ENCODE measurements at regions of chr9 and their contacts with region 1.

Region 1: DNA sequence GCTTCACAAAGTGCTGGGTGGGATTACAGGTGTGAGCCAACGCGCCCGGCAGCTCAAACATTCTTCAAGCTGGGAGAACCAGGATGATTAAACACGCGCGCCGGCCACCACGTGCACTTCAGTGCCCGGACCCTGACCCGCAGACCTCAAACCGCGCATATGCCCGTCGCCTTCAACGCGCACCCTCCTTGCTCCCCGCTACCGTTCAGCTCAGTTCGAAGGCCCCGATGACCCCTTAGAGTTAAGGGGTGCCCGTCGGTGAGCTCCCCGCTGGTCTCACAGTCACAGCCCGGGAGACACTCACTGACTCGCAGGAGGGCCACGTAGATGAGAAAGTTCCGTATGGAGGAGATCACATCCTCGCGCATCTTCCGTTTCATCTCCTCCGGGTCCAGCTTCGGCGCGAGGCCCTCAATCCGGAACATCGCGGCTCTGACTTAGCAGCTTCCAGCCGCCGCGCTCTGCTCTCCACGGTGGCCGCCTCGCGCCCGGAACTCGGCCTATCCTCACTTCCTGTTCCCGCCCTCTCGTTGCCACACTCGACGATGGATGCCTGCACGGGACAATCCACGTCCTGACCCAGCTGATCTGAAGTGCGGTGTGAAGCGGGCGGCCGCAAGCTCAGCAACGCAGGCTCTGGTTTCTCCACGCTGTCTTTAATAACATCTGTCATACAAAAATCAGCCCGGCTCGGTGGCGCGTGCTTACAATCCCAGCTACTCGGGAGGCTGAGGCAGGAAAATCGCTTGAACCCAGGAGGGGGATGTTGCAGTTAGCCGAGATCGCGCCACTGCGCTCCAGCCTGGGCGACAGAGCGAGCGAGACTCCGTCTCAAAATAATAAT is at the start of gene TOMM5:
- DNase-seq: peak; percentile 90 to 93 (median 92)
- H3K4me3 ChIP-seq: peak within 1 kb of the TSS; percentile 92 to 100
- H3K4me3 Mint-ChIP-seq: peak within 1 kb of the TSS; percentile 97 to 100 (median 98)
- H3K27ac ChIP-seq: peak within 1 kb of the TSS; percentile 79
- H3K27ac Mint-ChIP-seq: peak within 1 kb of the TSS; percentile 96 to 99 (median 98)
- H3K4me1 ChIP-seq: peaks cover 39% of the 10 kb centered on the region
- H3K4me1 Mint-ChIP-seq: peaks cover 22 to 50% (median 36%) of the 10 kb centered on the region in 4 donors
- H3K27me3 ChIP-seq: no peaks in the 10 kb centered on the region
- H3K27me3 Mint-ChIP-seq: peaks cover 3 to 10% of the 10 kb centered on the region in 2 donors
- total RNA-seq, gene TOMM5: 48.2 to 51.1 TPM

Region 2: DNA sequence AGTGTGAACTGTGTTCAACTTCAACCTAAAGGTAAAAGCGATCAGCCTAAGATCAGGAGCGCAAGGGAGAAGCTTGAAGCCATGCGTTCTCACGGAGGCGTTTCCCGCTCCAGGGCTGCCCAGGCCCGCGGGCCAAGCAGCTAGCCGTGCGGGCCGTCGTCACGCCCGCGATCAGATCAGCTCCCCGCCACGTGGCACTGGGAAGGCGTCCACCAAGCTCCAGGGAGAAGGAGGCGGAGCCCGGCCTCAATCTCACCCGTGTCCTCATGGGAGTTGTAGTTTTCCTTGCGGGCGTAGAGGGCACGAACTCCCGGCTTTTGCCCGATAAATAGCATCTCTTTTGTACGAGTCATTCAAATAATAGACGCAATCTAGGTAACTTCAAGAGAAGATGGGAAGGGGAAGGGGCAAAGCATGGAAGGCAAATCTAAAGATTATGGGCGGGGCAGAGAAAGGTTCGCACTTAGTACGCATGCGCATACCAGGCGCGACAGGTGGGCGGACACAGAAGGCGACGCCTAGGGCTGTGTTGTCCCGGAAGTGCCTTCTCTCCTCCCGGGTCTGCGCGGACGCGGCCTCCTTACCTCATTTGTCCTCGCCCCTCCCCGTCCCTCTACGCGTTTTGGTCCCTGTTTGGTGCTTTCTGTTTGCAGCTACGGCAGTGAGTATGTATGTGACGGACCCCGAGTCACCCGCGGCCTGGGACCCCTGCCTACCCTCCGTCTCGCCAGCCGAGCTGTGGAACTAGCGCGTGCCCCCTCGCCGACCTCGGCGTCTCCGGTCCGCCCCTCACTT is 512.8 kb before region 1 on chr9:
- CTCF ChIA-PET with region 1: no interaction called
- POLR2A ChIA-PET with region 1: interaction called, 4 read pairs
- intact Hi-C with region 1: loop called (anchors 2 kb)
- DNase-seq: peak; percentile 92 to 97 (median 95)
- H3K4me3 ChIP-seq: peak overlapping the region; percentile 85 to 92
- H3K4me3 Mint-ChIP-seq: peak overlapping the region; percentile 89 to 98 (median 96)
- H3K27ac ChIP-seq: peak overlapping the region; percentile 98
- H3K27ac Mint-ChIP-seq: peak overlapping the region; percentile 95 to 99 (median 98)
- H3K4me1 ChIP-seq: peaks cover 48% of the 10 kb centered on the region
- H3K4me1 Mint-ChIP-seq: peaks cover 22 to 58% (median 44%) of the 10 kb centered on the region in 4 donors
- H3K27me3 ChIP-seq: no peaks in the 10 kb centered on the region
- H3K27me3 Mint-ChIP-seq: peaks cover 0 to 7% of the 10 kb centered on the region in 2 donors

Region 3: GRCh38 chr9:37485389-37486219 is 106.7 kb before region 1 on chr9 and contains the start of gene POLR1E:
- CTCF ChIA-PET with region 1: interaction called, 11 read pairs
- POLR2A ChIA-PET with region 1: interaction called, 18 read pairs
- intact Hi-C with region 1: loop called (anchors 1 kb)
- DNase-seq: peak; percentile 94 to 98 (median 96)
- H3K4me3 ChIP-seq: peak within 1 kb of the TSS; percentile 65 to 80
- H3K4me3 Mint-ChIP-seq: peak within 1 kb of the TSS; percentile 92 to 99 (median 96)
- H3K27ac ChIP-seq: peak within 1 kb of the TSS; percentile 70
- H3K27ac Mint-ChIP-seq: peak within 1 kb of the TSS; percentile 74 to 99 (median 97)
- H3K4me1 ChIP-seq: peaks cover 32% of the 10 kb centered on the region
- H3K4me1 Mint-ChIP-seq: peaks cover 26 to 48% (median 39%) of the 10 kb centered on the region in 4 donors
- H3K27me3 ChIP-seq: peaks cover 5% of the 10 kb centered on the region
- H3K27me3 Mint-ChIP-seq: peaks cover 5% of the 10 kb centered on the region in 2 donors
- total RNA-seq, gene POLR1E: 36.2 to 38.2 TPM

Region 4: GRCh38 chr9:37575921-37576721 is 16.2 kb before region 1 on chr9 and contains the start of gene FBXO10:
- CTCF ChIA-PET with region 1: interaction called, 40 read pairs
- POLR2A ChIA-PET with region 1: interaction called, 21 read pairs
- intact Hi-C with region 1: no loop called
- DNase-seq: peak; percentile 36 to 49 (median 41)
- H3K4me3 ChIP-seq: peak within 1 kb of the TSS in 1 of 2 donors; percentile 58
- H3K4me3 Mint-ChIP-seq: peak within 1 kb of the TSS; percentile 88 to 95 (median 92)
- H3K27ac ChIP-seq: peak within 1 kb of the TSS; percentile 36
- H3K27ac Mint-ChIP-seq: peak within 1 kb of the TSS; percentile 57 to 94 (median 82)
- H3K4me1 ChIP-seq: peaks cover 15% of the 10 kb centered on the region
- H3K4me1 Mint-ChIP-seq: peaks cover 17 to 29% (median 21%) of the 10 kb centered on the region in 4 donors
- H3K27me3 ChIP-seq: no peaks in the 10 kb centered on the region
- H3K27me3 Mint-ChIP-seq: no peaks in the 10 kb centered on the region
- total RNA-seq, gene FBXO10: 5.5 to 6.1 TPM

Region 5: DNA sequence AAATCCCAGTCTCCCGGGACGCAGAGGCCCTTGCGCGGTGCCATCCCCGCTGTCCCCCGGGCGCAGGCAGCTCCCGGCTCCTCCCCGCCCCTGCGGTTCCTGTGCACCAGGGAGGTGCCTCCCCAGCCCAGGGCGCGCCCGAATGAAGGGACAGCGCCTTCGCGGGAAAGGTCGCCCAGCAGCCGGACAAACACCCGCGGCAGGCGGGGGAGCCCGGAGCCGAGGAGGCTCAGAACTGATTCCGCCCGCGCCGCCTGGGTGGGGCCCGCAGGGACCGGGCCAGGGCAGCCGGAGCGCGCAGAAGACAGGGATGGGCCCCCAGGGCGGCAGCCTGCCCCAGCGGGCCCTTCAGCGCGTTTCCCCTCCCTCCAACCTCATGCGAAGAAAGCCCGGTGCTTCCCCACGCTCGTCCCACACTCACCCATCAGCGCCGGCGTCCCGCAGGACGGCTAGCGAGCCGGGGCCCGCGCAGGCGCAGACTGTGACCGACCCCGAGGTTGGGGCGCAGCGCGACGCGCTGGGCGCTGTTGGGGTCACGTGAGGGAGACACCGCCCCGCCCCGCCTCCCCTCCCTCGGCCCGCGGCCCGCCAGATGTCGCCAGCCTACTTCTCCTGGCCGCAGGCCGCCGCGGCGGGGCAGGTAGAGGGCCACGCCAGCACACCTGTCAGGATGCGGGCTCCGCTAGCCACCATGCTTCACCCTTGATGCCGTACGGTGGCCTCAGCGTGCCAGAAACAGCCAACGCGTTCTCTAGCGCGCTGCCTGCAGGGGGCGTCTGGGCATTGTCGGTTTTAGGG is 311.5 kb after region 1 on chr9 and contains the start of gene SLC25A51:
- CTCF ChIA-PET with region 1: no interaction called
- POLR2A ChIA-PET with region 1: no interaction called
- intact Hi-C with region 1: loop called (anchors 5 kb)
- DNase-seq: peak; percentile 93 to 98 (median 95)
- H3K4me3 ChIP-seq: peak within 1 kb of the TSS; percentile 89 to 94
- H3K4me3 Mint-ChIP-seq: peak within 1 kb of the TSS; percentile 86 to 98 (median 91)
- H3K27ac ChIP-seq: peak within 1 kb of the TSS; percentile 75
- H3K27ac Mint-ChIP-seq: peak within 1 kb of the TSS; percentile 93 to 98 (median 94)
- H3K4me1 ChIP-seq: peaks cover 30% of the 10 kb centered on the region
- H3K4me1 Mint-ChIP-seq: peaks cover 12 to 39% (median 26%) of the 10 kb centered on the region in 4 donors
- H3K27me3 ChIP-seq: no peaks in the 10 kb centered on the region
- H3K27me3 Mint-ChIP-seq: peaks cover 0 to 2% of the 10 kb centered on the region in 2 donors
- total RNA-seq, gene SLC25A51: 40.2 to 43.3 TPM

Region 6: GRCh38 chr9:38079461-38080031 is 487.2 kb after region 1 on chr9:
- CTCF ChIA-PET with region 1: no interaction called
- POLR2A ChIA-PET with region 1: no interaction called
- intact Hi-C with region 1: no loop called
- DNase-seq: no peak
- H3K4me3 ChIP-seq: no peak overlapping the region
- H3K4me3 Mint-ChIP-seq: no peak overlapping the region
- H3K27ac ChIP-seq: no peak overlapping the region
- H3K27ac Mint-ChIP-seq: no peak overlapping the region
- H3K4me1 ChIP-seq: no peaks in the 10 kb centered on the region
- H3K4me1 Mint-ChIP-seq: peaks cover 0 to 3% (median under 1%) of the 10 kb centered on the region in 4 donors
- H3K27me3 ChIP-seq: no peaks in the 10 kb centered on the region
- H3K27me3 Mint-ChIP-seq: peaks cover 16 to 27% of the 10 kb centered on the region in 2 donors